Endothelial cell of umbilical vein (primary cell): ENCODE measurements at regions of chr3 and their contacts with region 1.

Region 1: GRCh38 chr3:149717391-149718056 is 34.8 kb downstream of the COMMD2 start:
- DNase-seq: peak; percentile 87
- H3K4me3 ChIP-seq: no peak overlapping the region
- H3K27ac ChIP-seq: no peak overlapping the region
- H3K4me1 ChIP-seq: peaks cover 15% of the 10 kb centered on the region
- H3K27me3 ChIP-seq: no peaks in the 10 kb centered on the region
- CTCF ChIP-seq: peak; percentile 54 to 58
- POLR2A ChIP-seq: no peak

Region 2: DNA sequence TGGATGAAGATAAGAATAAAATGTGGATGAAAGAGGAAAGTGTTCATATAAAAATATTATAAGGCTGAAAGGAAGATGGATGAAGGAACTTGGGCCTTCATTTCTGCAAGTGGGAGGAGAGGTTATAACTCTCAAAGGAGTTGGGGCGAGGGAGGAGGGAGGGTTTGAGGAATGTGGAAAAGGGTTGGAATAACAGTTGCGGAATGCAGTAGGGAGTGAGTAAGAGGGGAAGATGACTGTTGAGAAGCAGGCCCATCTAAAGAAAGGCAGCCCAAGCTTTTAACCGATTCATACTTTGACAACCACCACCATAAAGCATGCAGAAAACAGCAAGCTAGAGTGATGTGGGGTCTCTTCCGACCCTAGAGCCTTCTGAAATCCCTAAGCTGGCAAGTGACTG is 251.3 kb before region 1 on chr3:
- CTCF ChIA-PET with region 1: no interaction called
- POLR2A ChIA-PET with region 1: no interaction called
- dilution Hi-C with region 1: no loop called
- intact Hi-C with region 1: no loop called
- DNase-seq: peak; percentile 15
- H3K4me3 ChIP-seq: no peak overlapping the region
- H3K27ac ChIP-seq: peak overlapping the region; percentile 17
- H3K4me1 ChIP-seq: peaks cover 25% of the 10 kb centered on the region
- H3K27me3 ChIP-seq: no peaks in the 10 kb centered on the region
- CTCF ChIP-seq: no peak
- POLR2A ChIP-seq: no peak

Region 3: GRCh38 chr3:149494022-149494758 is 223.3 kb before region 1 on chr3:
- CTCF ChIA-PET with region 1: interaction called, 6 read pairs
- POLR2A ChIA-PET with region 1: no interaction called
- dilution Hi-C with region 1: no loop called
- intact Hi-C with region 1: loop called (anchors 1 kb)
- DNase-seq: peak; percentile 76
- H3K4me3 ChIP-seq: no peak overlapping the region
- H3K27ac ChIP-seq: no peak overlapping the region
- H3K4me1 ChIP-seq: peaks cover 6% of the 10 kb centered on the region
- H3K27me3 ChIP-seq: no peaks in the 10 kb centered on the region
- CTCF ChIP-seq: peak; percentile 80 to 83
- POLR2A ChIP-seq: no peak

Region 4: GRCh38 chr3:149527531-149528339 is 189.8 kb before region 1 on chr3:
- CTCF ChIA-PET with region 1: interaction called, 31 read pairs
- POLR2A ChIA-PET with region 1: no interaction called
- dilution Hi-C with region 1: no loop called
- intact Hi-C with region 1: loop called (anchors 1 kb)
- DNase-seq: peak; percentile 85
- H3K4me3 ChIP-seq: no peak overlapping the region
- H3K27ac ChIP-seq: peak overlapping the region; percentile 62
- H3K4me1 ChIP-seq: peaks cover 43% of the 10 kb centered on the region
- H3K27me3 ChIP-seq: no peaks in the 10 kb centered on the region
- CTCF ChIP-seq: peak in 1 of 2 donors; percentile 50
- POLR2A ChIP-seq: no peak

Region 5: DNA sequence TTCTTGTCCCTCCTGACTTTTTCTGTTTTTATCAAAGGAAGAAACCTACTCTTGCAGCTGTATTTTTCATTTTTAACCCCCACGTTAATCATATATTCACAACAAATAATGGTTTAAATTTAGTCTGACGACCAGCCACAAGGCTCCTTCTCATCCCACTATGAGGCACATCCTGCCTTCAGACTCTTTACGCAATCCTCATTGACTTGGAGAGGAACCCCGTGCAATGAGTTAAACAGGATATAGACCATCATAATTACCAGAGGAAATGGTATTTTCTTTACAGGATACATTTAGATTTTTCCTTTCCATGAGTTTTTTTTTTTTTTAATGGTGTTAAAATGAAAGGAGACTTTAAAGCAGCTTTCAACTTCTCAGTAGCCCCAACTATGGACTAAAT is 128.2 kb before region 1 on chr3:
- CTCF ChIA-PET with region 1: interaction called, 15 read pairs
- POLR2A ChIA-PET with region 1: no interaction called
- dilution Hi-C with region 1: no loop called
- intact Hi-C with region 1: no loop called
- DNase-seq: peak; percentile 95
- H3K4me3 ChIP-seq: peak overlapping the region in 1 of 3 experiments; percentile 10
- H3K27ac ChIP-seq: peak overlapping the region; percentile 96
- H3K4me1 ChIP-seq: peaks cover 96% of the 10 kb centered on the region
- H3K27me3 ChIP-seq: no peaks in the 10 kb centered on the region
- CTCF ChIP-seq: no peak
- POLR2A ChIP-seq: peak; percentile 38

Region 6: DNA sequence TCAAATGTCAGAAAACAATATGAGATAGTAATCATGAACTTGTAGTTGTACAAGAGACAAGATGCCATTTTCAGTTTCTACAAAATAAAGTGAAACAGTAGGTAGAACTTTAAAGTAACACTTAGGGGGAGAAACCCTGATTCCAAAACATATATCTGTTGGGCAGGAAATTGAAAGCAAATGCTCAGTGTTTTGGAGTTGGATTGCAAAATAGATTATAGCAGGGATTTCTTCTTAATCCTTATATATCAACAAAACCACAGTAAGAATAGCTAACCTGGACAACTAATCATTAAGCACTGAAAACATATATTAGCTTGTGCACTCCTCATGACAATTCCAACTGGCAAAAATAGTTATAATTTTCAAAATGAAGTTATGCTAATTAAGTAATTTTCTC is 12.1 kb before region 1 on chr3:
- CTCF ChIA-PET with region 1: interaction called, 17 read pairs
- POLR2A ChIA-PET with region 1: no interaction called
- dilution Hi-C with region 1: no loop called
- intact Hi-C with region 1: no loop called
- DNase-seq: no peak
- H3K4me3 ChIP-seq: no peak overlapping the region
- H3K27ac ChIP-seq: no peak overlapping the region
- H3K4me1 ChIP-seq: no peaks in the 10 kb centered on the region
- H3K27me3 ChIP-seq: no peaks in the 10 kb centered on the region
- CTCF ChIP-seq: no peak
- POLR2A ChIP-seq: no peak